ENCODE measurements at regions of chr4 and their contacts with region 1.

Region 1: GRCh38 chr4:121307445-121308327 is 73.1 kb downstream of the QRFPR start:
- DNase-seq: peak; percentile 56 to 62
- H3K4me3 ChIP-seq: no peak overlapping the region
- H3K4me3 Mint-ChIP-seq: no peak overlapping the region
- H3K27ac Mint-ChIP-seq: peak overlapping the region; percentile 20
- H3K4me1 ChIP-seq: peaks cover 38% of the 10 kb centered on the region
- H3K4me1 Mint-ChIP-seq: peaks cover 20% of the 10 kb centered on the region
- H3K27me3 ChIP-seq: no peaks in the 10 kb centered on the region
- H3K27me3 Mint-ChIP-seq: no peaks in the 10 kb centered on the region
- CTCF ChIP-seq: peak; percentile 72 to 86

Region 2: GRCh38 chr4:121252224-121252806 is 55.4 kb before region 1 on chr4:
- CTCF ChIA-PET with region 1: interaction called, 6 read pairs
- POLR2A ChIA-PET with region 1: no interaction called
- intact Hi-C with region 1: loop called (anchors 1 kb)
- DNase-seq: peak; percentile 69
- H3K4me3 ChIP-seq: no peak overlapping the region
- H3K4me3 Mint-ChIP-seq: no peak overlapping the region
- H3K27ac Mint-ChIP-seq: no peak overlapping the region
- H3K4me1 ChIP-seq: peaks cover 4% of the 10 kb centered on the region; the same call in 1 of the 2 replicates
- H3K4me1 Mint-ChIP-seq: no peaks in the 10 kb centered on the region
- H3K27me3 ChIP-seq: no peaks in the 10 kb centered on the region
- H3K27me3 Mint-ChIP-seq: no peaks in the 10 kb centered on the region
- CTCF ChIP-seq: peak; percentile 63 to 74

Region 3: GRCh38 chr4:121277624-121278023 is 30.1 kb before region 1 on chr4:
- CTCF ChIA-PET with region 1: interaction called, 3 read pairs
- POLR2A ChIA-PET with region 1: no interaction called
- intact Hi-C with region 1: loop called (anchors 1 kb)
- DNase-seq: peak; percentile 45 to 69
- H3K4me3 ChIP-seq: no peak overlapping the region
- H3K4me3 Mint-ChIP-seq: no peak overlapping the region
- H3K27ac Mint-ChIP-seq: no peak overlapping the region
- H3K4me1 ChIP-seq: peaks cover 43% of the 10 kb centered on the region
- H3K4me1 Mint-ChIP-seq: peaks cover 41% of the 10 kb centered on the region
- H3K27me3 ChIP-seq: no peaks in the 10 kb centered on the region
- H3K27me3 Mint-ChIP-seq: no peaks in the 10 kb centered on the region
- CTCF ChIP-seq: peak; percentile 46 to 65

Measured in Caco-2 (cell line).